Breast epithelium (tissue), 4 donors: ENCODE measurements at regions of chr11 and their contacts with region 1.

Region 1: GRCh38 chr11:1395771-1396374 is 6.1 kb downstream of the BRSK2 start:
- DNase-seq: no peak
- H3K4me3 ChIP-seq: no peak overlapping the region
- H3K27ac ChIP-seq: no peak overlapping the region
- H3K4me1 ChIP-seq: no peaks in the 10 kb centered on the region
- H3K27me3 ChIP-seq: peaks cover under 1 to 56% of the 10 kb centered on the region in 2 donors
- CTCF ChIP-seq: no peak
- POLR2A ChIP-seq: no peak

Region 2: DNA sequence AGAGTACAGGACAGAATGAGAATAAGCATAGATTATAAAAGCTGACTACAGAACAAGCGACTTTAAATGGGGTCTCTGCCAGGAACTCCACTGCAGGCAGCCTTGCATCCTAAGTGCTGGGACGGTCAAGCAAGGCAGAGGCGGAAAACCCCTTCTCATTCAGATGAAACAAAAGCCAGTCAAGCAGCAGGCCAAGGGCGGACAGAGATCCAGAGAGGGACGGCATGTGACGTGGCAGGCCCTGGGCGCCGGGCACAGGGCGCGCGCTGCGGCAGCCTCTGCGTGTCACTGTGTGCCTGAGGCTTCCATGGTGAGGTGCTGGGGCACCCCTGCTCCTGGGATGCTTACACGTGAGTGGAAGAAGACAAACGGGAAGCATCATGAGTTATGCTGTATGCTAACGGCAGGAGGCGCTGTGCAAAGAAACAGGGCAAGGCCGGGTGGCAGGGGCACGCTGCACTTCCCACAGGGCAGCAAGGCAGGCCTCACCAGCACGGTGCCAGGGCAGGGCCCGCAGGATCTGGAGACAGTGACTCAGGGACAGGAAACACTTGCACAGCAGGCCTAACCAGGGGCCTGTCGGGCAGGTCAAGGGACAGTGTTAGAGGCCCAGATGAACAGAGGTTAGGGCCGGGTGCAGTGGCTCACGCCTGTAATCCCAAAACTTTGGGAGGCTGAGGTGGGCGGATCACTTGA is 92.6 kb before region 1 on chr11:
- intact Hi-C with region 1: loop called (anchors 1 kb)
- DNase-seq: peak in 1 of 2 donors; percentile 49
- H3K4me3 ChIP-seq: no peak overlapping the region
- H3K27ac ChIP-seq: peak overlapping the region; percentile 63 to 67
- H3K4me1 ChIP-seq: peaks cover 2 to 37% of the 10 kb centered on the region in 2 donors
- H3K27me3 ChIP-seq: no peaks in the 10 kb centered on the region
- CTCF ChIP-seq: no peak
- POLR2A ChIP-seq: no peak

Region 3: DNA sequence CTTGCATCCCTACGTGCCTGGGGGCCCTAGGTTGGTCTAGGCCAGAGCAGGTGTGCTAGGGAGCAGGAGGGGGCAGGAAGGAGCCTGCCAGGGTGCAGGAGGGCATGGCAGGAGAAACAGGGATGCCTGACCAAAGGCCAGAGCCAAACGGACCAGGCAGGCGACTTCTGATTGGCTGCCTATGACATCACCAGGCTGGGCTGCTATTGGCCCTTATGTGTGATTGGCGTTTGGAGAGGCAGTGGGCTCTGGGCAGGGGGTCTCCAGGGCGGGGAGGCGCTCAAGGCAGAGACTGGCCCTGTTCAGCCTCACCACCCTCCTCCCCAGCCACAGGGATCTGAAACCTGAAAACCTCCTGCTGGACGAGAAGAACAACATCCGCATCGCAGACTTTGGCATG is 46.3 kb after region 1 on chr11:
- intact Hi-C with region 1: no loop called
- DNase-seq: no peak
- H3K4me3 ChIP-seq: no peak overlapping the region
- H3K27ac ChIP-seq: no peak overlapping the region
- H3K4me1 ChIP-seq: no peaks in the 10 kb centered on the region
- H3K27me3 ChIP-seq: peaks cover 0 to 81% of the 10 kb centered on the region in 2 donors
- CTCF ChIP-seq: no peak
- POLR2A ChIP-seq: no peak

Region 4: DNA sequence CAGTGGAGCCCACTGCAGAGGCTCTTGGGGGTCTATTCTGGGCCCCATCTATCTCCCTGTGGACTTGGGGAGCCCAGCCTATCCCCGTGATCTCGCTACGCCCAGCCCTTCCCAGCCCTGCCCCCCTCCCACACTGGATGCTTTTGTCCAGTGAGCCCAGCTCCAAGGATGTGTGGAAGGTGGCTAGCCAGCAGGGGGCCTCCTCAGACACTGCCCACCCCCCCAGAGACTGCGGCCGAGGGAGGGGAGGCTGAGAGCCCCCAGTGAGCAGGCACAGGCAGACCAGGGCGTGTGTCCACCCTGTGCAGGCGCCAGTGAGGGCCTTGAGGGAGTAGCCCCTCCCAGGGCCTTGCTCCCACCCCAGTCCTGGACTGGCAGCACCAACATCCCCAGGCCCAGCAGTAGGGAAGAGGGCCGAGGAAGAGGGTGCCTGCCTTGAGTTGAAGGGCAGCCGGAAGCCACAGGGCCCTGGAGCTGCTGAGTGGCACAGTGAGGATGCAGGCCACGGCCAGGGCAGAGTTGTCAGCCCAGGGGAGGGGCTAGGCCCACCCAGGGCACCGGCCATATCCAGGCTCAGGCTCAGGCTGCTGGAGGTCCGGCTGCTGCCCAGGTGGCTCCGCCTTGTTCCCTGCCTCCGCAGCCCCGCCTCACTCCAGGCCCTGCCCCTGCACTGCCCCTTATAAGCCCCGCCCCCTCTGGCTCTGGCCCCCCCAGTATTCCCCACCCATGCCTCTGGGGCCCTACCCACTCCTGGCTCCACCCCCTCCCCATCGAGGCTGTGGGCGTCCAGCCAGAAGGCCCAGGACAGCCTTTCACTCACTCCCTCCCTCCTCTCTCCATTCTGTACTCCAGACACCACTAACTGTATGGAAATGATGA is 62.7 kb after region 1 on chr11:
- intact Hi-C with region 1: no loop called
- DNase-seq: no peak
- H3K4me3 ChIP-seq: peak overlapping the region in 1 of 3 donors; percentile 62
- H3K27ac ChIP-seq: peak overlapping the region in 1 of 2 donors; percentile 81
- H3K4me1 ChIP-seq: peaks cover 0 to 3% of the 10 kb centered on the region in 2 donors
- H3K27me3 ChIP-seq: no peaks in the 10 kb centered on the region
- CTCF ChIP-seq: no peak
- POLR2A ChIP-seq: no peak